ENCODE measurements at regions of chr9 and their contacts with region 1.

Region 1: DNA sequence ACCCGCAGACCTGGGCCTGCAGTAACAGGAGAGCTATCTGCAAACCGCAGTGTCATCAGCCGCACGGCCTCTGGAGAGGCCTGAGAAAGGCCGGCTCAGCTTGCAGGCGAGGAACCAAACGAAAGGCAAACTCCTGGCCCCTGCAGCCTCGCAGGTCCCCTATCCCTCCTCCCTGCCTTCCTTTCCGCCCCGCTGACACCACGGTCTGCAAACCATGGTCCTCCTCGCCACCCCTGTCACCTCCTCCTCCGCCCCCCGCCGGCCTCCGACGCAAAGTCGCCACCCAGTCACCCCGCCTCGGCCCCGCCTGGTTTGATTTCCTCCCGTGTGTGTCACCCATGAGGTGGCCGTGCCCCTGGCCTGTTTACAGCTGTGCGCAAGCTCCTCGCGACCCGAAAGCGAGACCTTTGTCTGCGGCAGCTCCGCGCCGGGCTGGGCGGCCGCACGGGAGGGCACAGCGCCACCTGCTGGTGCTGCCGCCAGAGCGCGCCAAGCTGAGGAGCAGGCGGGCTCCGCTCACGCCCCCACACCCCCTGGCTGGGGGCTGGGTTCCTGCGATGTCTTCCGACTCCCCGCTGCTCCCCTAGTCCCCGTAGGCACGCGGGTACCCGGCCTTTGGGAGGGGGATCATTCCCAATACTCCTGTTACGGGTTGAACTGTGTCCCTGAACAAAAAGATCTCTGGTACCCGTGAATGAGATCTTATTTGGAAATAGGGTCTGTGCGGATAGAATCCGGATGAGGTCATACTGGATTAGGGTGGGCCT is 19.4 kb downstream of the GBGT1 start:
- DNase-seq: peak; percentile 88
- H3K4me3 ChIP-seq: peak overlapping the region in 3 of 4 donors; percentile 47 to 53 (median 48)
- H3K27ac ChIP-seq: peak overlapping the region; percentile 45 to 68 (median 55)
- H3K4me1 ChIP-seq: peaks cover 0 to 74% (median 57%) of the 10 kb centered on the region in 4 donors
- H3K27me3 ChIP-seq: no peaks in the 10 kb centered on the region
- CTCF ChIP-seq: peak; percentile 92 to 99 (median 96)
- EP300 ChIP-seq: no peak
- POLR2A ChIP-seq: peak in 1 of 2 donors; percentile 12

Region 2: GRCh38 chr9:133103183-133103986 is 40.9 kb before region 1 on chr9:
- intact Hi-C with region 1: loop called (anchors 1 kb)
- DNase-seq: peak; percentile 82
- H3K4me3 ChIP-seq: no peak overlapping the region
- H3K27ac ChIP-seq: no peak overlapping the region
- H3K4me1 ChIP-seq: no peaks in the 10 kb centered on the region
- H3K27me3 ChIP-seq: no peaks in the 10 kb centered on the region
- CTCF ChIP-seq: peak; percentile 86 to 99 (median 98)
- EP300 ChIP-seq: no peak
- POLR2A ChIP-seq: no peak